HepG2 (cell line): ENCODE measurements at regions of chr1 and their contacts with region 1.

Region 1: DNA sequence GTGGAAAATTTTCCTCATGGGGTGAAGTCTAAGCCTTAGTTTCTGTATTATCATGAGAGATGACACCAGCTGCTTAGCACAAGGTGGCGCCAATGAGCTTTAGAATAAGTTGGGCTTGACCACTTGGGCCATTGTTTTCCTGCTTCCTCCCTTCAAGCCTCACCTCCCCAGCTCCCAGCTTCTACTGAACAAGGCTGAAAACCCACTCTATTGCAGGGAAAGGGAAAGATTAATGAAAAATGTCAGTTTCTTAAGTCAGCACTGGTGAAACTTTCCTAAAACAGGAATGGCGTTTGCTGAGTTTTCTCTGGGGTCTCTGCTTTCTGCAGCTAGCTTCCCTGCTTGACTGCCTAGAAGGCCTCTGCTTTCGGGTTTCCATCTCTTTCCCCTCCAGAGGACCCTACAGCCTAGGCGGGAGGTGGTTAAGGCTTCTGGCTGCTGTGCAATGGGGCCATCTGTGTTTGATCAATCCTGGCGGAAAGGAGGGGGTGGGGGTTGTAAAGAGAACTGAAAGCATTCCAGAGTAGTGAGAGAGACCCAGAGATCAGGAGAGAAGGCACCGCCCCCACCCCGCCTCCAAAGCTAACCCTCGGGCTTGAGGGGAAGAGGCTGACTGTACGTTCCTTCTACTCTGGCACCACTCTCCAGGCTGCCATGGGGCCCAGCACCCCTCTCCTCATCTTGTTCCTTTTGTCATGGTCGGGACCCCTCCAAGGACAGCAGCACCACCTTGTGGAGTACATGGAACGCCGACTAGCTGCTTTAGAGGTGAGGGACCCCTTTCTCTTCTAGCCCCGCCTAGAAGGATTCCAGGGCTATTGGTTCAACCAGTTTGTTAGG is at the start of gene OLFML3:
- DNase-seq: peak; percentile 87
- ATAC-seq: peak; percentile 82
- H3K4me3 ChIP-seq: peak within 1 kb of the TSS; percentile 56 to 72 (median 63)
- H3K27ac ChIP-seq: peak within 1 kb of the TSS; percentile 59
- H3K4me1 ChIP-seq: peaks cover 44% of the 10 kb centered on the region
- H3K27me3 ChIP-seq: no peaks in the 10 kb centered on the region; a peak in 1 of 5 replicates
- CTCF ChIP-seq: peak; percentile 80
- EP300 ChIP-seq: no peak
- POLR2A ChIP-seq: 0 out of 4 replicates have a peak, but pooled peaks of 1 of the 2 experiments have one; percentile 24
- RAD21 ChIP-seq: peak; percentile 50
- total RNA-seq, gene OLFML3: 2.1 and 5.1 TPM in 2 replicates

Region 2: DNA sequence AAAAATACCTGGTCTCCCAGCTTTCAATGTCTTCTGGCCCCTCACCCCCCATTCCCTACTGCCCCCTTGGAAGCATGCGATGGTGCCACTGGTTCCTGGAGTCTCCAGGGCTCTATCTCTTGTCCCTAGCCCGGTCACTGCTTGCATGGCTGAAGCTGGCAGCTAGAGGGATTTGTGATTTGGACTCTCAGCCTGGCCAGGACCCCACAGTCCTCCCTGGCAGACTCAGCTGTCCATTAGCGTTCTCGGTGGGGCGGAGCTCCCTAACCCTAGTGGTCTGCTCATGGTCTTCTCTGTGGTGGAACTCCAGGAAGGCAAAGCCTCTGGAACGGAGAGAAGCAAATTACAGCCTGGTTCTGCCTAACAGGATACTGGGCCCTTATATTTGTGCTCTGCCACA is 74.5 kb after region 1 on chr1:
- CTCF ChIA-PET with region 1: no interaction called
- POLR2A ChIA-PET with region 1: no interaction called
- in situ Hi-C with region 1: no loop called
- intact Hi-C with region 1: loop called (anchors 2 kb)
- DNase-seq: no peak
- ATAC-seq: no peak; the same call in 2 of the 3 replicates
- H3K4me3 ChIP-seq: no peak overlapping the region
- H3K27ac ChIP-seq: no peak overlapping the region
- H3K4me1 ChIP-seq: no peaks in the 10 kb centered on the region
- H3K27me3 ChIP-seq: no peaks in the 10 kb centered on the region; a peak in 1 of 5 replicates
- CTCF ChIP-seq: no peak
- EP300 ChIP-seq: no peak
- POLR2A ChIP-seq: no peak
- RAD21 ChIP-seq: no peak

Region 3: GRCh38 chr1:114219172-114219868 is 240.2 kb after region 1 on chr1:
- CTCF ChIA-PET with region 1: no interaction called
- POLR2A ChIA-PET with region 1: no interaction called
- in situ Hi-C with region 1: no loop called
- intact Hi-C with region 1: loop called (anchors 2 kb)
- DNase-seq: no peak
- ATAC-seq: no peak; the same call in 2 of the 3 replicates
- H3K4me3 ChIP-seq: no peak overlapping the region
- H3K27ac ChIP-seq: no peak overlapping the region
- H3K4me1 ChIP-seq: no peaks in the 10 kb centered on the region
- H3K27me3 ChIP-seq: peaks cover 0 to 10% of the 10 kb centered on the region in 2 experiments; a peak in 1 of 5 replicates
- CTCF ChIP-seq: peak; percentile 23; the same call in 1 of the 2 replicates
- EP300 ChIP-seq: no peak
- POLR2A ChIP-seq: no peak
- RAD21 ChIP-seq: no peak

Region 4: GRCh38 chr1:114282751-114283403 is 303.8 kb after region 1 on chr1:
- CTCF ChIA-PET with region 1: interaction called, 20 read pairs
- POLR2A ChIA-PET with region 1: interaction called, 3 read pairs
- in situ Hi-C with region 1: loop called (anchors 5 kb)
- intact Hi-C with region 1: loop called (anchors 1 kb)
- DNase-seq: peak; percentile 80
- ATAC-seq: peak; percentile 99
- H3K4me3 ChIP-seq: no peak overlapping the region
- H3K27ac ChIP-seq: no peak overlapping the region
- H3K4me1 ChIP-seq: no peaks in the 10 kb centered on the region
- H3K27me3 ChIP-seq: peaks cover 0 to 4% of the 10 kb centered on the region in 2 experiments; a peak in 1 of 5 replicates
- CTCF ChIP-seq: peak; percentile 86
- EP300 ChIP-seq: no peak
- POLR2A ChIP-seq: no peak
- RAD21 ChIP-seq: peak; percentile 59; the same call in 1 of the 2 replicates